ENCODE measurements at regions of chr1 and their contacts with region 1.

Region 1: DNA sequence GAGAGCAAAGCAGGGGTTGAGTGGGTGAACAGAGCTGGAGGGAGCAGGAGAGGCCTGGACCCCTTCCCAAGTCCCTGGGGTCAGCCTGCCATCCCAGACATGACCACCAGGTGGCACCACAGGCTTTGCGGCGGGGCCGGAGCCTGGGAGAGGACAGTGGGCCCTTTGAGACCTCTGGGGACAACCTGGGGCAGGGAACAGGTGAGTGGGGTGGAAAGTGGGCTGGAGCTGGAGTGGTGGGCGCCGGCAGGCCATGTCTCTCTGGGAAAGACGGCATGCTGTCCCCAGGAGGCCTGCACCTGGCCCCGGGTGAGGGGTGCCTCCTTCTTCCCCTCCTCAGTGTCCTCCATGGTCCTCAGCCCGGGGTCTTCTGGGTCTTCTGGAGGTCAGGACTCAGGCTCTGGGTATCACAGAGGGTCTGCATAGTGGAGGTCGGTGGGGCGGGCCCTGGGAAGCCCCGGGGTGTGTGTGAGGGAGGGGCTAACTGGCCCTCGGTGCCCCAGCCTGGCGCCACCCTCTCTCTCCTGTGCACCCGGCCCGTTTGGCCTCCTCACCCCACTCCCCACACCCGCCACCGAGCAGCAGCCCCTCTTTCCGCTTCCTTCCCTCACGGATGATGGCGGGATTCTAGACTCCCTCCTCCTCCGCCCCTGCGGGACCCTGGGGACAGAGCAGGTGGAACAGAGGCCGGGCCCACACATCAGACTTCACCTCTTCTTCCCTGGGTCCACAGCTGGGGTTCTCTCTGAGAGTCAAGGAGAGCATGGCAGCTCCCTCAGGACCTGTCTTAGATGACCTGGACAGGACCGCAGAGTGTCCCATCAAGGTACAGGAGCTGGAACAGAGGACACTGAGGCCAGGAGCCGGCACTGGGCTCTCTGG is 28.4 kb upstream of the PKP1 start:
- DNase-seq: peak in 1 of 2 donors; percentile 88
- ATAC-seq: peak; percentile 71
- H3K4me3 ChIP-seq: no peak overlapping the region
- H3K27ac ChIP-seq: no peak overlapping the region
- H3K4me1 ChIP-seq: no peaks in the 10 kb centered on the region
- H3K27me3 ChIP-seq: no peaks in the 10 kb centered on the region

Region 2: DNA sequence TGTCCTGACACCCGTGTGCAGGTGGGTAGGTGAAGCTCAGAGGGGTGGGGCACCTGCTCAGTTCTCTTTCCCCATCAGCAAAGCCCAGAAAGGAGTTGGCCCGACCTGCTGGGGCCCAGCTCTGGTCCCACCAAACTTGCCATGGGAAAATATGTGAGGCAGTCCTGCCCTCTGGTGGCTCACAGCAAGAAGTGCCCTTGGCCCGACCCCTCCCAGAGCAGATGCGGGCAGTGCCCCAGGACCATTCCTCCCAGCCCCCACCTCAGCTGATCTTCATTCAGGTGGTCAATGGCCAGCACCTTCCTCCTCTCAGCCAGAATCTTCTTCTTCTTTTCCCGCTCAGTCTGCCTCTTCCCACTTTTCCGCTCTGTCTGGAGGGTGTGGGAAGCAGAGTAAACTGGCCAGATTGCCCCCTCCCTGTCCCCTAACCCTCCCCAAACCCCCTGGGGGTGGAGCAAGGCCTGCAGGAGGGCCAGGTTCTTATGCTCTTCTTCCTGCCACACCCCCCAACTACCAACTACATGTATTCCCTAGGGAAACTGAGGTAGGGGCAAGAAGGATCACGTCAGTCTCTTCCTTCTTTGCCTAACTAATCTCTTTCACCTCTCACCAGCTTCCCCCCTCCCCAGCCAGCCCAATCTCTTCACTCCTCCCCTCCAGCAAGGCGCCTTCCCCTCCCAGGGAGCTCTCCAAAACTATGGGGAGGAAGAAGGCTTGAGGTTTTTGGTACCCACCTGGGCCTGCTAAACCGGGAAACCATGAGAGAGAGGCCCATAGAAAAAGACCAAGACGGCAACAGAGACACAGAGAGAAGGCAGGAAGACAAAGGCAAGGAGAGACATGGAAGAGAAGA is 107.0 kb after region 1 on chr1:
- intact Hi-C with region 1: loop called (anchors 1 to 5 kb)
- DNase-seq: peak; percentile 42 to 76
- ATAC-seq: no peak
- H3K4me3 ChIP-seq: no peak overlapping the region
- H3K27ac ChIP-seq: no peak overlapping the region
- H3K4me1 ChIP-seq: no peaks in the 10 kb centered on the region
- H3K27me3 ChIP-seq: no peaks in the 10 kb centered on the region

Region 3: DNA sequence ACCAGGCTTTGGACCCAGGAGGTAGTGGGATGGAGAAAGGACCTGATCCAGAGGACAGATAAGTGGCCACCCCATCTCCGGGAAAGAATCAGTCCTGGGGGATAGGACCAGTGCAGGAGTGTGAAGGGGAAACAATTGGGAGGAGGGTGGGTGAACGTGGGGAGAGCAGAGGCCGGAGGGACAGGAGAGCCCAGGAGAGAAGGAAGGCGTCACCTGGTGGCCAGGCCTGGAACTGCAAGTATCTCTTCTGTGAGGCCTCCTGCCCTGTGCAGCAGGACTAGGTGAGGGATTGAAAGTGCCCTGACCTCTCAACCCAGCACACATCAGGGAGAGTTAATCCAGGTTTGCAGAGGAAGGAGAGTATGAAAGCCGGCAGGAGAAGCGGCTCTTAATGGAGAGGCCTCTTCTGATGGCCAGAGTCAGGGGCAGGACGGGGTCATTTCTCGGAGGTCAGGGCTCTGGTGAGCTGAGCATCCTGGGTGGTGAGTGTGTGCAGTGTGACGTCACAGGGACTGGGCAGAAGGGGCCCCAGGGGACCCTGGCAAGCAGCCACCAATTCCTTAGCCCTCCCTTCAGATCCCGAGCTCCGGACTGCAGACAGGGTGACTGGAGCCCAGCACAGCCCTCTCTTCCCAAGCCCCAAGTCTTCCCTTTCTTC is 153.4 kb after region 1 on chr1:
- intact Hi-C with region 1: loop called in 1 of 2 experiments (anchors 10 kb)
- DNase-seq: peak; percentile 83 to 92
- ATAC-seq: peak; percentile 55
- H3K4me3 ChIP-seq: no peak overlapping the region
- H3K27ac ChIP-seq: no peak overlapping the region
- H3K4me1 ChIP-seq: no peaks in the 10 kb centered on the region
- H3K27me3 ChIP-seq: no peaks in the 10 kb centered on the region

Measured in aorta (tissue), 5 donors.